IMR-90 (cell line): ENCODE measurements at regions of chr5 and their contacts with region 1.

Region 1: GRCh38 chr5:161544350-161544765 is 2.2 kb downstream of the GABRB2 start:
- DNase-seq: peak; percentile 4
- ATAC-seq: 0 out of 2 replicates have a peak, but pooled peaks have one; percentile 48
- H3K4me3 ChIP-seq: no peak overlapping the region
- H3K27ac ChIP-seq: no peak overlapping the region
- H3K4me1 ChIP-seq: no peaks in the 10 kb centered on the region
- H3K27me3 ChIP-seq: no peaks in the 10 kb centered on the region; the same call in 1 of the 2 replicates
- CTCF ChIP-seq: peak; percentile 43
- POLR2A ChIP-seq: no peak
- RAD21 ChIP-seq: peak; percentile 13; the same call in 1 of the 2 replicates

Region 2: GRCh38 chr5:159936686-159937329 is 1607.5 kb before region 1 on chr5:
- CTCF ChIA-PET with region 1: no interaction called
- POLR2A ChIA-PET with region 1: no interaction called
- dilution Hi-C with region 1: no loop called
- in situ Hi-C with region 1: no loop called
- intact Hi-C with region 1: no loop called
- DNase-seq: peak; percentile 15
- ATAC-seq: no peak
- H3K4me3 ChIP-seq: no peak overlapping the region
- H3K27ac ChIP-seq: no peak overlapping the region
- H3K4me1 ChIP-seq: no peaks in the 10 kb centered on the region
- H3K27me3 ChIP-seq: no peaks in the 10 kb centered on the region; the same call in 1 of the 2 replicates
- CTCF ChIP-seq: no peak
- POLR2A ChIP-seq: no peak
- RAD21 ChIP-seq: no peak

Region 3: GRCh38 chr5:160508780-160509361 is 1035.5 kb before region 1 on chr5:
- CTCF ChIA-PET with region 1: no interaction called
- POLR2A ChIA-PET with region 1: no interaction called
- dilution Hi-C with region 1: no loop called
- in situ Hi-C with region 1: no loop called
- intact Hi-C with region 1: loop called (anchors 5 kb)
- DNase-seq: peak; percentile 83
- ATAC-seq: peak; percentile 97
- H3K4me3 ChIP-seq: no peak overlapping the region
- H3K27ac ChIP-seq: no peak overlapping the region
- H3K4me1 ChIP-seq: peaks cover 2% of the 10 kb centered on the region; the same call in 1 of the 2 replicates
- H3K27me3 ChIP-seq: peaks cover 4% of the 10 kb centered on the region
- CTCF ChIP-seq: peak; percentile 86
- POLR2A ChIP-seq: no peak
- RAD21 ChIP-seq: peak; percentile 91

Region 4: GRCh38 chr5:163408311-163408923 is 1864.1 kb after region 1 on chr5:
- CTCF ChIA-PET with region 1: no interaction called
- POLR2A ChIA-PET with region 1: no interaction called
- dilution Hi-C with region 1: no loop called
- in situ Hi-C with region 1: no loop called
- intact Hi-C with region 1: loop called (anchors 1 kb)
- DNase-seq: peak; percentile 53
- ATAC-seq: peak; percentile 92
- H3K4me3 ChIP-seq: no peak overlapping the region
- H3K27ac ChIP-seq: no peak overlapping the region
- H3K4me1 ChIP-seq: no peaks in the 10 kb centered on the region
- H3K27me3 ChIP-seq: peaks cover 1% of the 10 kb centered on the region; the same call in 1 of the 2 replicates
- CTCF ChIP-seq: peak; percentile 86
- POLR2A ChIP-seq: no peak
- RAD21 ChIP-seq: peak; percentile 82